PC-9 (cell line): ENCODE measurements at regions of chr2 and their contacts with region 1.

Region 1: GRCh38 chr2:174004905-174005605 is 39.9 kb upstream of the SP3 start:
- DNase-seq: peak; percentile 44 to 55
- H3K4me3 ChIP-seq: no peak overlapping the region
- H3K27ac ChIP-seq: no peak overlapping the region
- H3K4me1 ChIP-seq: peaks cover 7% of the 10 kb centered on the region
- H3K27me3 ChIP-seq: no peaks in the 10 kb centered on the region
- CTCF ChIP-seq: no peak

Region 2: GRCh38 chr2:173972603-173973002 is 32.5 kb before region 1 on chr2:
- CTCF ChIA-PET with region 1: no interaction called
- POLR2A ChIA-PET with region 1: interaction called, 5 read pairs
- intact Hi-C with region 1: loop called (anchors 2 kb)
- DNase-seq: peak; percentile 95 to 96
- H3K4me3 ChIP-seq: no peak overlapping the region
- H3K27ac ChIP-seq: peak overlapping the region; percentile 21
- H3K4me1 ChIP-seq: peaks cover 32% of the 10 kb centered on the region
- H3K27me3 ChIP-seq: no peaks in the 10 kb centered on the region
- CTCF ChIP-seq: no peak

Region 3: DNA sequence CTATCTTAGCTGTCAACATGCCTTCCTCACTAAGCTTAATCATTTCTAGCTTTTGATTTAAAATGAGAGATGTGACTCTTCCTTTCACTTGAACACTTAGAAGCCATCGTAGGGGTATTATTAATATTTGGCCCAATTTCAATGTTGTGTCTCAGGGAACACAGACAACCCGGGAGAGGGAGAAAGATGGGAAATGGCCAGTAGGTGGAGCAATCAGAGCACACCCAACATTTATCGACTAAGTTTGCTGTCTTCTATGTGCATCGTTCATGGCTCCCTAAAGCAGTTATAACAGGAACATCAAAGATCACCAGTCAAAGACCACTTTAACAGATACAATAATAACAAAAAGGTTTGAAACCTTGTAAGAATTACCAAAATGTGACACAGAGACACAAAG is 133.1 kb after region 1 on chr2:
- CTCF ChIA-PET with region 1: interaction called, 11 read pairs
- POLR2A ChIA-PET with region 1: no interaction called
- intact Hi-C with region 1: no loop called
- DNase-seq: no peak
- H3K4me3 ChIP-seq: no peak overlapping the region
- H3K27ac ChIP-seq: no peak overlapping the region
- H3K4me1 ChIP-seq: no peaks in the 10 kb centered on the region
- H3K27me3 ChIP-seq: no peaks in the 10 kb centered on the region
- CTCF ChIP-seq: peak; percentile 47; the same call in 1 of the 2 replicates